Esophagus muscularis mucosa (tissue), 4 donors: ENCODE measurements at regions of chr17 and their contacts with region 1.

Region 1: DNA sequence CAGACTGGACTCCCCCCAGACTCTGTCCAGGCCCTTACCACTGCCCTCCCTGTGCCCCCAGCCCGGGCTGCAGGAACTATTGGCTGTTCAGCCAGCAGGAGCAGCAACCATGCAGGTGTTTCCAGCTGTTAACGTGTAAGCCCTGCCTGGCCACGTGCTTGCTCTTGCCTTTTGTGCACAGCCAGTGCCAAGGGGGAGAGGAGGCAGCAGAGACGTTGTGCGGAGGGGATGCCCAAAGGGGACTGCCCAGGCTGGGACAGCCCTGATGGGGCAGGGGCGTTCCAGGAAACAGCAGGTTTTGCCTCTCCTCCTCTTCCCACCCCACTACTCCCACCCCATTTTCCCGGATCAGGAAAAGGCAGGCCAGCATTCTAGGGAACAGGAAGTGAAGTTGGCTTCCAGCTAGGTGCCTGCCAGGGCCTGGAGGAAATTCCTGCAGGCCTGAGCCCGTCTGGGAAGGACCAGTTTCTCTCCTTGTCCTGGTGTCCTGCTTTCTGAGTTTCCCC is 16.7 kb upstream of the LASP1NB start:
- DNase-seq: no peak
- H3K4me3 ChIP-seq: peak overlapping the region in 1 of 4 donors; percentile 16
- H3K27ac ChIP-seq: peak overlapping the region; percentile 10 to 71 (median 60)
- H3K4me1 ChIP-seq: peaks cover 59 to 65% (median 63%) of the 10 kb centered on the region in 4 donors
- H3K27me3 ChIP-seq: no peaks in the 10 kb centered on the region
- CTCF ChIP-seq: no peak
- EP300 ChIP-seq: no peak
- POLR2A ChIP-seq: no peak

Region 2: GRCh38 chr17:38868817-38869525 is 39.8 kb before region 1 on chr17:
- intact Hi-C with region 1: loop called (anchors 5 kb)
- DNase-seq: peak; percentile 99
- H3K4me3 ChIP-seq: peak overlapping the region; percentile 80 to 98 (median 93)
- H3K27ac ChIP-seq: peak overlapping the region; percentile 95 to 98 (median 97)
- H3K4me1 ChIP-seq: peaks cover 36 to 51% (median 45%) of the 10 kb centered on the region in 4 donors
- H3K27me3 ChIP-seq: no peaks in the 10 kb centered on the region
- CTCF ChIP-seq: peak in 1 of 3 experiments; percentile 15
- EP300 ChIP-seq: no peak
- POLR2A ChIP-seq: no peak

Region 3: GRCh38 chr17:38967290-38967738 is 58.6 kb after region 1 on chr17 and contains the start of gene FBXO47:
- intact Hi-C with region 1: no loop called
- DNase-seq: peak; percentile 97
- H3K4me3 ChIP-seq: peak within 1 kb of the TSS; percentile 34 to 46 (median 44)
- H3K27ac ChIP-seq: peak within 1 kb of the TSS; percentile 50 to 77 (median 74)
- H3K4me1 ChIP-seq: peaks cover 0 to 13% (median 7%) of the 10 kb centered on the region in 4 donors
- H3K27me3 ChIP-seq: no peaks in the 10 kb centered on the region
- CTCF ChIP-seq: peak in 1 of 3 experiments; percentile 37
- EP300 ChIP-seq: no peak
- POLR2A ChIP-seq: no peak
- total RNA-seq, gene FBXO47: 0.26 TPM in 1 of 4 donors, not detected in the others

Region 4: GRCh38 chr17:39014044-39014794 is 105.5 kb after region 1 on chr17:
- intact Hi-C with region 1: no loop called
- DNase-seq: no peak
- H3K4me3 ChIP-seq: no peak overlapping the region
- H3K27ac ChIP-seq: peak overlapping the region in 2 of 4 donors; percentile 0 to 28
- H3K4me1 ChIP-seq: peaks cover 0 to 18% (median 14%) of the 10 kb centered on the region in 4 donors
- H3K27me3 ChIP-seq: no peaks in the 10 kb centered on the region
- CTCF ChIP-seq: no peak
- EP300 ChIP-seq: no peak
- POLR2A ChIP-seq: no peak